ENCODE measurements at regions of chr12 and their contacts with region 1.

Region 1: GRCh38 chr12:121793838-121794533 is 498 bp upstream of the RHOF start:
- DNase-seq: peak; percentile 94
- ATAC-seq: peak; percentile 69

Region 2: GRCh38 chr12:121811434-121812319 is 17.7 kb after region 1 on chr12:
- intact Hi-C with region 1: loop called (anchors 2 kb)
- DNase-seq: peak; percentile 84
- ATAC-seq: peak; percentile 94

Region 3: DNA sequence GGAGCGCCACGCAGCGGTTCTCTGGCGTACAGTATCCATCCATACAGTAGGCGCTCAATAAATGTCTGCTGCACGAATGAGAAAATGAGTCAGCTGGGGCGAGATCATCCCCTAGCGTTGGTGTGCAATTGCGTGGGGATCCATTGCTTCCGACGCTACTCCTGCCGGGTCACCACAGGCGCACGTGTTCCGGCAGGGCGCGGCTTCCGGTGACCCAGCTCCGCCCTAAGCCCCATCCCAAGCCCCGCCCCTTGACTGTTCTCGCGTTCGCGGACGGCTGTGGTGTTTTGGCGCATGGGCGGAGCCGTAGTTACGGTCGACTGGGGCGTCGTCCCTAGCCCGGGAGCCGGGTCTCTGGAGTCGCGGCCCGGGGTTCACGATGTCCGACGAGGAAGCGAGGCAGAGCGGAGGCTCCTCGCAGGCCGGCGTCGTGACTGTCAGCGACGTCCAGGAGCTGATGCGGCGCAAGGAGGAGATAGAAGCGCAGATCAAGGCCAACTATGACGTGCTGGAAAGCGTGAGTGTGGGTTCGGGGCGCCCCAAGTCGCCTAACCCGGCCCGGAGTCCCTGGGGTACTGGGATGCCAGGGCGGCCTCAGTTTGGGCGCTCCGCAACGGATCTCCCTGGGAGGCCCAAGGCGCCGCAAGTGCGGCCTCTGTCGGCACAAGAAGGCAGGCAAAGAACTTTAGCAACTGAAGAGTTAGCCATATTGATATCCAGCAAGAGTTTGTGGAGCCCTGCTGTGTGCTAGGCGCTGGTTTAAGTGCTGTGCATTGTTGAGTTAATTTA is 94.7 kb after region 1 on chr12 and contains the start of gene PSMD9:
- intact Hi-C with region 1: loop called (anchors 5 kb)
- DNase-seq: peak; percentile 99
- ATAC-seq: peak; percentile 99
- total RNA-seq, gene PSMD9: 34.9 TPM

Measured in Right ventricle myocardium superior (tissue), 1 donor.